Activated T-helper 2 cell treated with anti-CD3 and anti-CD28 coated beads, Interferon-gamma antibody, Interleukin-2, Interleukin-4, amounts not matched to agents 10 μg/mL and 5 μg/mL and 100 μg/mL, durations not matched to agents 14 hours and 24 hours and 36 hours (primary cell): ENCODE measurements at regions of chr14 and their contacts with region 1.

Region 1: DNA sequence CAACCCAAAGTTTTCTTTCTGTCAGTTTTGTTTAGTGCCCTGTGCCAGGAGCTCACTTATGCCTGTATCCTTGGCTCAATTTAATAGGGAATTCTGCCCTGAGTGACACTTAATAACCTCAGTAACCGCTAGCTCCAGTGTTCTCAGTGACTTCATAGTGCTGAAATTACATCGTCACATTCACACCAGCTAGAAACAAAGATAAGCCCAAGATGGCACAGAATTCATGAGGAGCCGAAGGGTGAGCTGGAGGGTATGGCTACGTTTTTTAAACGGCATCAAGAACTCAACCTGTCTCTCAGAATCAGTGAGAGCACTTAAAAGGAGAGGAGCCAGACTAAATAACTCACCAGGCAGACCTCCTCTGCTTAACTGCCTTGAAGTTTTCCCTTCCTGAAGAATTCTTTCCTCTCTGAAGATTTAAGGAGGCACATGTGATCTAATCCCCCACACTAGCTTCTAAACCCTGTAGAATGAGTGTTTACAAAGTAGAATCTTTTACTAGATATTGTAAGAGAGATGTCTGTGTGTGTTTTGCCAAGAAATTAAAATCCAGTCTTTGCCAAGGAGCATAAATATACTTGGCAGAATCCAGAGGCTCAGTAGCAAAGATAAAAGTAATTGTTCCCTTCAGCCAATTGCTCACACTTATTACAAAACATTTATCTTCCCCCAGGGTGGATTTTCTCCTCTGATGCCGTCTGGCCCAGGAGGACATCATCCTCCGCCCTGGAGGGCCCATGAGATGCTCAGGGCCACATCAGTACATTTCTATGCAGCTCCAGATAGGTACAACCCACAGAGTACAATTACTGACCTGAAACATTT is 37.3 kb downstream of the PTGER2 start:
- DNase-seq: no peak
- H3K4me3 Mint-ChIP-seq: peak overlapping the region; percentile 73
- H3K27ac Mint-ChIP-seq: peak overlapping the region; percentile 99
- H3K4me1 Mint-ChIP-seq: peaks cover 77% of the 10 kb centered on the region
- H3K27me3 Mint-ChIP-seq: no peaks in the 10 kb centered on the region

Region 2: GRCh38 chr14:50875359-50876070 is 1475.9 kb before region 1 on chr14:
- intact Hi-C with region 1: loop called (anchors 5 kb)
- DNase-seq: peak; percentile 65
- H3K4me3 Mint-ChIP-seq: no peak overlapping the region
- H3K27ac Mint-ChIP-seq: no peak overlapping the region
- H3K4me1 Mint-ChIP-seq: peaks cover 25% of the 10 kb centered on the region
- H3K27me3 Mint-ChIP-seq: peaks cover 73% of the 10 kb centered on the region

Region 3: GRCh38 chr14:52142504-52142903 is 208.9 kb before region 1 on chr14:
- intact Hi-C with region 1: no loop called
- DNase-seq: no peak
- H3K4me3 Mint-ChIP-seq: no peak overlapping the region
- H3K27ac Mint-ChIP-seq: no peak overlapping the region
- H3K4me1 Mint-ChIP-seq: no peaks in the 10 kb centered on the region
- H3K27me3 Mint-ChIP-seq: peaks cover 11% of the 10 kb centered on the region

Region 4: DNA sequence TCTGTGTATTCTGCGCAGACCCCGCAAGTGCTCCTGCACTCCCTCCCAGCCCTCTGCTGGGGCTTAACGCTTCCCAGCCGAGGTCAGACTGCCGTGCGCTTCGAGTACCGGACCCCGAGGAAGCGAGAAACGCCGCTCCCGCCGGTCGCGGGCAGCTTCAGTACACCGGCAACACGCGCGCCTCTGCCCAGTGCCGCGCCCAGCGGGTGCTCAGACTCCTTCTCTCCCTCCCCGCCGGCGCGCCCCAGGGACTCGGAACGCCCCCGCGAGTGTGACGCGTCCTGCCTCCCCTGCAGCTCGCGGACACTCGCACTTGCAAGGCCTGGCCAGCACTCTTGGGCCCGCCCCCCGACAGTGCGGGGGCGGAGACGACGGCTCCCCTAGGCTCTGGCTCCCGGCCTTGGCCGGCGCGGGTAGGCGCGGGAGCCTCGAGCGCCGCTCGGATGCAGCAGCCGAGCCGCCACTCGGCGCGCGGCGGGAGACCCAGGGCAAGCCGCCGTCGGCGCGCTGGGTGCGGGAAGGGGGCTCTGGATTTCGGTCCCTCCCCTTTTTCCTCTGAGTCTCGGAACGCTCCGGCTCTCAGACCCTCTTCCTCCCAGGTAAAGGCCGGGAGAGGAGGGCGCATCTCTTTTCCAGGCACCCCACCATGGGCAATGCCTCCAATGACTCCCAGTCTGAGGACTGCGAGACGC is 37.4 kb before region 1 on chr14 and contains the start of gene PTGER2:
- intact Hi-C with region 1: loop called (anchors 1 kb)
- DNase-seq: peak; percentile 87
- H3K4me3 Mint-ChIP-seq: peak within 1 kb of the TSS; percentile 100
- H3K27ac Mint-ChIP-seq: peak within 1 kb of the TSS; percentile 98
- H3K4me1 Mint-ChIP-seq: peaks cover 59% of the 10 kb centered on the region
- H3K27me3 Mint-ChIP-seq: no peaks in the 10 kb centered on the region
- total RNA-seq, gene PTGER2: 53.3 and 54.1 TPM in 2 replicates

Region 5: DNA sequence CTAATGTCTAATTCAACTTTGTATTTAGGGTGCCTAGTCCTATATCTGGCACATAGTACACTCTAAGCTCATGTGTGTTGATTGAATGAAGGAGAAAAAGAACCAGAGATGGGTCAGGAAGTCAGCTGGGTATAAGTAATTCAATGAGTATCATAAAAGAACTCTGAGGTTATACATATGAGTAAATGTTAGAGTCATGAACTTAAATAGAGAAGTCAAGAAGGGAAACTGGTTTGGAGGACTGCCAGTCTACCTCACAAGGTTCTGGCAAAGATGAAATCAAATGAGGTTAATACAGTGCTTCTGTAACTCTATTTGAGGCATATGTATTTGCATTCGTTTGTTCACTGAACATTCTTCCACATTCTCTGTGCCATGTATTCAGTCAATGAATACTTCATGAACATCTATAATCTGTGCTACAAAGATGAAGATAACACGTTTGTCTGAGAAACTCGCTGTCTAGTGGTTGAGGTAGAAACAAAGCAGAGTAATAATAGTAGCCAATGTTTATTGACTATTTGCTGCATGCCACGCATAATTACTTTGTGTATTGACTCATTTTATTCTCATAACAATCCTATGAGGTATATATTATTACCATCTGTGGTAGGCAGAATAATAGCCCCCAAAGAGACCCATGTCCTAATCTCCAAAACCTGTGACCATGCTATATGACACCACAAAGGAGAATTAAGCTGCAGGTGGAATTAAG is 51.5 kb after region 1 on chr14:
- intact Hi-C with region 1: loop called (anchors 1 kb)
- DNase-seq: no peak
- H3K4me3 Mint-ChIP-seq: no peak overlapping the region
- H3K27ac Mint-ChIP-seq: peak overlapping the region; percentile 47
- H3K4me1 Mint-ChIP-seq: peaks cover 69% of the 10 kb centered on the region
- H3K27me3 Mint-ChIP-seq: no peaks in the 10 kb centered on the region

Region 6: GRCh38 chr14:52455291-52456088 is 104.0 kb after region 1 on chr14:
- intact Hi-C with region 1: loop called (anchors 1 kb)
- DNase-seq: no peak
- H3K4me3 Mint-ChIP-seq: no peak overlapping the region
- H3K27ac Mint-ChIP-seq: no peak overlapping the region
- H3K4me1 Mint-ChIP-seq: peaks cover 19% of the 10 kb centered on the region
- H3K27me3 Mint-ChIP-seq: no peaks in the 10 kb centered on the region